IMR-90 (cell line): ENCODE measurements at regions of chr1 and their contacts with region 1.

Region 1: GRCh38 chr1:69263921-69264391 is 303.8 kb upstream of the LRRC7 start:
- DNase-seq: no peak
- ATAC-seq: no peak
- H3K4me3 ChIP-seq: no peak overlapping the region
- H3K27ac ChIP-seq: no peak overlapping the region
- H3K4me1 ChIP-seq: no peaks in the 10 kb centered on the region
- H3K27me3 ChIP-seq: no peaks in the 10 kb centered on the region
- CTCF ChIP-seq: no peak
- POLR2A ChIP-seq: no peak
- RAD21 ChIP-seq: no peak

Region 2: GRCh38 chr1:68745011-68745410 is 518.9 kb before region 1 on chr1:
- CTCF ChIA-PET with region 1: no interaction called
- POLR2A ChIA-PET with region 1: no interaction called
- dilution Hi-C with region 1: no loop called
- in situ Hi-C with region 1: no loop called
- intact Hi-C with region 1: loop called (anchors 10 kb)
- DNase-seq: no peak
- ATAC-seq: no peak
- H3K4me3 ChIP-seq: no peak overlapping the region
- H3K27ac ChIP-seq: no peak overlapping the region
- H3K4me1 ChIP-seq: no peaks in the 10 kb centered on the region
- H3K27me3 ChIP-seq: no peaks in the 10 kb centered on the region
- CTCF ChIP-seq: no peak
- POLR2A ChIP-seq: no peak
- RAD21 ChIP-seq: no peak